ENCODE measurements at regions of chr1 and their contacts with region 1.

Region 1: DNA sequence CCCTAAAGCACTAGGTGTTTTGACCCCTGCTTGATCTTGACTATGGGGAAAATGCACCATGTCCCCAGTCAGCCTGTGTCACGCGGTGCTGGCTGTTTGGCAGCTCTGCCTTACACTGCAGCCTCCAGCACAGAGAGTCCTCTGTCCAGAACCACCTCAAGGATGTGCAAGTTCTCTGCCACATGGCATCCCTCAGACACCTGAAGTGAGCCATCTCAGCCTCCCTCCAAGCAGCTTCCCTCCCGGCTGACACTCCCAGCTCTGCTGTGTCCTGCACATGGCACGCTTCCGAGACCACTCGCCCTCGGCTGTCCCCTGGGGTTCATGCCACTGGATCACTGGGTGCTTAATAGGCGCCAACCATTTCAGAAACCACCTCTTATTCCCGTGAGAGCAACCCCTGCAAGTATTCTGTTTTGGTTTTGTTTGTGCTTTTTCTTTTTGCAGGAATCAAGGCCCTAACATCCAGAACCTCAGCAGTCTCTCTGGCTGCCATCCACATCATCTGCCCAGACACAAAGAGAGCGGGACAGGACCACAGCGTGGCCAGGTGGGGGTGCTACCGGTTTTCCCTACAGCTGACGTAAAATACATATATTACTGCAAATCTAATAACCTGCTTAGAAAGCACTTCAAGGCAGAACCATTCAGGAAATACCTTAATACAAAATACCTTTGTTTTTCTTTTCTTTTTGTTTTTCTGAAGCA is 45.7 kb downstream of the CAPZB start:
- DNase-seq: peak; percentile 79

Region 2: GRCh38 chr1:19405761-19406487 is 33.7 kb before region 1 on chr1:
- intact Hi-C with region 1: loop called in 1 of 2 experiments (anchors 5 kb)
- DNase-seq: no peak

Region 3: DNA sequence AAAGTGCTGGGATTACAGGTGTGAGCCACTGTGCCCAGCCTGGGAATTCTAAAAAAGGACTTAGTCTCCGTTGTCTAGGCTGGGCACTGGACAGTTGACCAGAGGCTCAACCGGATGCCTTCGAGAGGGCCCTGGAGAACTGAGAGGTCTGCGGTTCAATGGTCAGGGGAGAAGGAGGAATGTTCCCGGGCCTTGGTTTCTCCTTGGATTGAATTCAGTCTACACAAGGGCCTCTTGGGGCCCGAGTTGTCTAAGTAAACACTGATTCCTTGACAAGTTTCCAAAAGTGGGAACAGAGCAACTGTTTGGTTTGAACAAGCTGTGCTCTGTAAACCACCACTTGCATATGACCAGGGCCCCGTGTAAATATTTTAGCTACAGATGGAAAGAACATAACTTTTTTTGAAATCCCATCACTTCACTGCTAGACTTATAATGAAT is 74.8 kb after region 1 on chr1:
- intact Hi-C with region 1: no loop called
- DNase-seq: peak; percentile 76

Measured in posterior vena cava (tissue), 2 donors.